Natural killer cell (primary cell): ENCODE measurements at regions of chr6 and their contacts with region 1.

Region 1: DNA sequence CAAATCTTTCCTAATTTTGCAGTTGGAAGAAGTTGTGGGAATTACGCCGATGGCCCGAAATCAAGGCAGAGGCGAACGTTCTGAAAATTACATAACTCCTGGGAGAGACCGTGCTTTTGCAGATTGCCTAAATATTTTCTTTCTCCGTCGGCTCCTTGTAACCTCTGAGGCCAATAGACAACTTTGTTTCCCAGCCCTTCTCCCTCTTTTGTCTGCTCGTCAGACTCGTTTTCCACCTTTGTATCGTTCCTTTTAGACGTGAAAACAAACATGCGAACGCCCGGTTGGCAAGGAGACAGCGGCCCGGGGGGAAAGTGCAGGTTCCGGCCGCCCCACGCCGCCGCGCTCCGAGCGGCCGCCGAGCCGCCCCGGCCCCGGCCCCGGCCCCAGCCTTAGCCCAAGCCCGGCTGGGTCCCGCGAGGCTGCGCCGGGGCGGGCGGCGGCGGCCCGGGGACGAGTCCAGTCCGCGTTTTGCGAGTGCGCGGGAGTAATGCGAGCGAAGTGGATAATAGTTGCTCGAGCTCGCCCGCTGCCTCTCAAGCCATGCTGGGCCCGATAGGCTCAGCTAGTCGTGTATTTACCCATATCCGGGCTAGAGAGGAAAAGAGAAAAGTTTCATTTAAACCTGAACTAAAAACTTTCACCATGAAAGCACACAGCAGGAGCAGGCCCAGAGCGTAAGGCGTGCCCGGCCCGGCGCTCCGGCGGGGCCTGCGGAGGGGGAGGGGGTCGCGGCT is at the start of gene ARID1B:
- DNase-seq: peak; percentile 79 to 91
- ATAC-seq: peak; percentile 56 to 78 (median 72)
- H3K4me3 ChIP-seq: peak within 1 kb of the TSS; percentile 89
- H3K4me3 Mint-ChIP-seq: peak within 1 kb of the TSS; percentile 97
- H3K27ac ChIP-seq: peak within 1 kb of the TSS; percentile 90
- H3K27ac Mint-ChIP-seq: peak within 1 kb of the TSS; percentile 92
- H3K4me1 ChIP-seq: peaks cover 11% of the 10 kb centered on the region
- H3K4me1 Mint-ChIP-seq: peaks cover 27 to 38% of the 10 kb centered on the region in 2 donors
- H3K27me3 ChIP-seq: no peaks in the 10 kb centered on the region
- H3K27me3 Mint-ChIP-seq: peaks cover 0 to 2% of the 10 kb centered on the region in 2 donors
- CTCF ChIP-seq: no peak
- total RNA-seq, gene ARID1B: 180 to 201 (median 189) TPM

Region 2: GRCh38 chr6:156612361-156612760 is 164.6 kb before region 1 on chr6:
- intact Hi-C with region 1: no loop called
- DNase-seq: no peak
- ATAC-seq: no peak
- H3K4me3 ChIP-seq: no peak overlapping the region
- H3K4me3 Mint-ChIP-seq: no peak overlapping the region
- H3K27ac ChIP-seq: no peak overlapping the region
- H3K27ac Mint-ChIP-seq: no peak overlapping the region
- H3K4me1 ChIP-seq: no peaks in the 10 kb centered on the region
- H3K4me1 Mint-ChIP-seq: no peaks in the 10 kb centered on the region
- H3K27me3 ChIP-seq: no peaks in the 10 kb centered on the region
- H3K27me3 Mint-ChIP-seq: peaks cover 14 to 26% of the 10 kb centered on the region in 2 donors
- CTCF ChIP-seq: no peak

Region 3: GRCh38 chr6:156686995-156687788 is 89.8 kb before region 1 on chr6:
- intact Hi-C with region 1: loop called (anchors 1 kb)
- DNase-seq: peak; percentile 80 to 93
- ATAC-seq: peak; percentile 89 to 95 (median 93)
- H3K4me3 ChIP-seq: peak overlapping the region; percentile 95
- H3K4me3 Mint-ChIP-seq: peak overlapping the region; percentile 92
- H3K27ac ChIP-seq: peak overlapping the region; percentile 96
- H3K27ac Mint-ChIP-seq: peak overlapping the region; percentile 72 to 75
- H3K4me1 ChIP-seq: peaks cover 12% of the 10 kb centered on the region
- H3K4me1 Mint-ChIP-seq: peaks cover 12 to 16% of the 10 kb centered on the region in 2 donors
- H3K27me3 ChIP-seq: no peaks in the 10 kb centered on the region
- H3K27me3 Mint-ChIP-seq: peaks cover 6 to 10% of the 10 kb centered on the region in 2 donors
- CTCF ChIP-seq: no peak

Region 4: GRCh38 chr6:156852132-156852857 is 75.3 kb after region 1 on chr6:
- intact Hi-C with region 1: loop called (anchors 5 kb)
- DNase-seq: peak in 1 of 2 donors; percentile 28
- ATAC-seq: no peak
- H3K4me3 ChIP-seq: no peak overlapping the region
- H3K4me3 Mint-ChIP-seq: no peak overlapping the region
- H3K27ac ChIP-seq: no peak overlapping the region
- H3K27ac Mint-ChIP-seq: peak overlapping the region in 1 of 2 donors; percentile 9
- H3K4me1 ChIP-seq: peaks cover 33% of the 10 kb centered on the region
- H3K4me1 Mint-ChIP-seq: peaks cover 91 to 95% of the 10 kb centered on the region in 2 donors
- H3K27me3 ChIP-seq: no peaks in the 10 kb centered on the region
- H3K27me3 Mint-ChIP-seq: no peaks in the 10 kb centered on the region
- CTCF ChIP-seq: no peak

Region 5: DNA sequence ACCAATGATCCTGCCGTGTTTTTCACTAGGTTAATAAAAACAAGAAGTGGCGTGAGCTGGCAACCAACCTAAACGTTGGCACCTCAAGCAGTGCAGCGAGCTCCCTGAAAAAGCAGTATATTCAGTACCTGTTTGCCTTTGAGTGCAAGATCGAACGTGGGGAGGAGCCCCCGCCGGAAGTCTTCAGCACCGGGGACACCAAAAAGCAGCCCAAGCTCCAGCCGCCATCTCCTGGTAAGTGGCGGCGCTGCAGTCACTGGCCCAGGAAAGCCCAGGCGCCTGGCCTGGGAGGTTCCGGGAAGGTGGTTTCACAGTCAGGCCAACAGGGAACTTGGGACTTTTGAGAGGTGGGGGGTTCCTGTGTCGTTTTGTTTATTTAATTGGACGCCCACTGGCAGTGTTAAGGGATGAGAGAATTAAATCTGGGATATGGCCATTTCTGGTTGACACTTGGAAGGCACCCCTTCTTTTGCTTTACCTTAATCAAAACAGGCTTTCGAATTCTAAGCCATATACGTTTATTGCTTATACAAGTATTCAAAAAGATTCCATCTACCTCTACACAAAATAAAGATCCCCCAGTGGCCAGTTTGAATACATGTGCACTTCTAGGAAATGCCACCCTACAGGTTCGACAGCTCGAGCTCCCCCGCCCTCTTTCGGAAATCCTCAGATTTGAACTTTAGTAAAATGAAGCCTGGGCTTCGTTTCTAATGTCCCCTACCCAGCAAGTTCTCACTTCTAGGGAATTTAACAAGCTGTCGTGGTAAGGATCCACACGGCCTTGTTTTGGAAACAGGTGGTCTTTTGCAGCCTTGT is 407.4 kb after region 1 on chr6:
- intact Hi-C with region 1: loop called (anchors 5 kb)
- DNase-seq: peak; percentile 59 to 75
- ATAC-seq: peak; percentile 70 to 97 (median 84)
- H3K4me3 ChIP-seq: no peak overlapping the region
- H3K4me3 Mint-ChIP-seq: no peak overlapping the region
- H3K27ac ChIP-seq: no peak overlapping the region
- H3K27ac Mint-ChIP-seq: peak overlapping the region in 1 of 2 donors; percentile 57
- H3K4me1 ChIP-seq: peaks cover 13% of the 10 kb centered on the region
- H3K4me1 Mint-ChIP-seq: peaks cover 14 to 25% of the 10 kb centered on the region in 2 donors
- H3K27me3 ChIP-seq: no peaks in the 10 kb centered on the region
- H3K27me3 Mint-ChIP-seq: no peaks in the 10 kb centered on the region
- CTCF ChIP-seq: peak; percentile 85